Activated CD8-positive, alpha-beta T cell treated with anti-CD3 and anti-CD28 coated beads, Interleukin-2, amount 10 ng/mL, durations not matched to agents 7 days and 5 days (primary cell): ENCODE measurements at regions of chr17 and their contacts with region 1.

Region 1: DNA sequence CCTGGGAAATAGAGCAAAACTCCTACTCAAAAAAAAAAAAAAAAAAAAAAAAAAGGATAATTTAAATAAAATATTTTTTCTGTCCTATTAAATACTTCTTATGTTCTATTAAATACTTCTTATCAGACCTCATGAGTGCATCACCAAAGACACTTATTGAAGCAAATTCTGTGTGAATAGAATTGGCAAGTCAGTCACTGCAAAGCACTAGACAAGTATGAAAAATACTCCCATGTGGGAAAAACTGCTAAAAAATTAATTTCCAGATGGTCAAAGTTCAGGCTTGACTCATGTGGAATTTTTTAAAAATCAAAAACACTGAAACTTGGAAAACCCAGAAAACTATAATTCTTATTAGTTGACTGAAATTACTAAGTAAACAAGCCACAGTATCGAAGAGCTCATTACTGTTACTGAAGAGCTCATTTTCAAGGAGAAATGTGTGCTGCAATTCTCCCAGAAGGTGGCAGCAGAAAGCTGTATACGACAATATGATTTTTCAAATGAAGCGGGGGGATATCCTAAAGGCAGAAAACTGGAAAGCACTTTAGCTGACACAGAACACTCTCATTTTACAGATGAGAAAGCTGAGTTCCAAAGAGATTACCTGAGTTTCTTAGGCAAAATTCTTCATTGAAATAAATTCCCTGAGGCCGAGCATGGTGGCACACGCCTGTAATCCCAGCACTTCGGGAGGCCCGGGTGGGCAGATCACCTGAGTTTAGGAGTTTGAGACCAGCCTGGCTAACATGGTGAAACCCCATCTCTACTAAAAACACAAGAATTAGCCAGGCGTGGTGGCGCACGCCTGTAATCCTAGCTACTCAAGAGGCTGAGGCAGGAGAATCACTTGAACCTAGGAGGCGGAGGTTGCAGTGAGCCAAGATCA is 15.9 kb upstream of the FBXO47 start:
- DNase-seq: peak; percentile 71
- ATAC-seq: peak; percentile 64
- H3K4me3 Mint-ChIP-seq: no peak overlapping the region
- H3K27ac Mint-ChIP-seq: no peak overlapping the region
- H3K4me1 Mint-ChIP-seq: peaks cover 5% of the 10 kb centered on the region
- H3K27me3 Mint-ChIP-seq: peaks cover 8% of the 10 kb centered on the region

Region 2: DNA sequence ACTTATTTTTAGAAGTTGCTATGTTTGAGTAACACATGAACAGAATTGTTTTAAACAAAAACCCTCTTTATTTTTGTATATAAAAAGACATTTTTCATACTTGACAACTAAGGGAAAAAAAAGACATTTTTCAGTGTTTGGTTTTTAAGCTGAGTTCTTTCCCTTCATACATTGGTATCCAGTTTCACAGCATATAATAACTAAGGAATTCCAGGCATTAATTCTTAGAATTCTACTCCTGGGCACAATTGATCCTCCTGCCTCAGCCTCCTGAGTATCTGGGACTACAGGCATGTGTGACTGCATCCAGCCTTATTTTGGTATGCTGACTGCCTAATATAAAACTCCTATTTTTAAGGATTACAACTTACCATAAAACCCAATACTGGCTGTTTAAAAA is 24.3 kb before region 1 on chr17:
- CTCF ChIA-PET with region 1: interaction called, 11 read pairs
- POLR2A ChIA-PET with region 1: no interaction called
- DNase-seq: no peak
- ATAC-seq: no peak
- H3K4me3 Mint-ChIP-seq: no peak overlapping the region
- H3K27ac Mint-ChIP-seq: no peak overlapping the region
- H3K4me1 Mint-ChIP-seq: peaks cover 33% of the 10 kb centered on the region
- H3K27me3 Mint-ChIP-seq: no peaks in the 10 kb centered on the region

Region 3: GRCh38 chr17:39014044-39014794 is 31.1 kb after region 1 on chr17:
- CTCF ChIA-PET with region 1: interaction called, 34 read pairs
- POLR2A ChIA-PET with region 1: no interaction called
- DNase-seq: no peak
- ATAC-seq: no peak
- H3K4me3 Mint-ChIP-seq: no peak overlapping the region
- H3K27ac Mint-ChIP-seq: no peak overlapping the region
- H3K4me1 Mint-ChIP-seq: peaks cover 27% of the 10 kb centered on the region
- H3K27me3 Mint-ChIP-seq: no peaks in the 10 kb centered on the region

Region 4: GRCh38 chr17:39069114-39069756 is 86.1 kb after region 1 on chr17:
- CTCF ChIA-PET with region 1: interaction called, 24 read pairs
- POLR2A ChIA-PET with region 1: no interaction called
- DNase-seq: peak; percentile 59
- ATAC-seq: peak; percentile 79
- H3K4me3 Mint-ChIP-seq: no peak overlapping the region
- H3K27ac Mint-ChIP-seq: no peak overlapping the region
- H3K4me1 Mint-ChIP-seq: peaks cover 18% of the 10 kb centered on the region
- H3K27me3 Mint-ChIP-seq: peaks cover 4% of the 10 kb centered on the region

Region 5: GRCh38 chr17:39110435-39111136 is 127.5 kb after region 1 on chr17:
- CTCF ChIA-PET with region 1: no interaction called
- POLR2A ChIA-PET with region 1: no interaction called
- DNase-seq: no peak
- ATAC-seq: no peak
- H3K4me3 Mint-ChIP-seq: no peak overlapping the region
- H3K27ac Mint-ChIP-seq: no peak overlapping the region
- H3K4me1 Mint-ChIP-seq: no peaks in the 10 kb centered on the region
- H3K27me3 Mint-ChIP-seq: no peaks in the 10 kb centered on the region

Region 6: GRCh38 chr17:39144416-39144840 is 161.3 kb after region 1 on chr17:
- CTCF ChIA-PET with region 1: interaction called, 289 read pairs
- POLR2A ChIA-PET with region 1: no interaction called
- DNase-seq: no peak
- ATAC-seq: no peak
- H3K4me3 Mint-ChIP-seq: no peak overlapping the region
- H3K27ac Mint-ChIP-seq: no peak overlapping the region
- H3K4me1 Mint-ChIP-seq: no peaks in the 10 kb centered on the region
- H3K27me3 Mint-ChIP-seq: peaks cover 5% of the 10 kb centered on the region

Region 7: GRCh38 chr17:39174907-39175694 is 192.0 kb after region 1 on chr17:
- CTCF ChIA-PET with region 1: interaction called, 100 read pairs
- POLR2A ChIA-PET with region 1: interaction called, 4 read pairs
- DNase-seq: peak; percentile 87
- ATAC-seq: peak; percentile 87
- H3K4me3 Mint-ChIP-seq: no peak overlapping the region
- H3K27ac Mint-ChIP-seq: no peak overlapping the region
- H3K4me1 Mint-ChIP-seq: peaks cover 34% of the 10 kb centered on the region
- H3K27me3 Mint-ChIP-seq: no peaks in the 10 kb centered on the region

Region 8: DNA sequence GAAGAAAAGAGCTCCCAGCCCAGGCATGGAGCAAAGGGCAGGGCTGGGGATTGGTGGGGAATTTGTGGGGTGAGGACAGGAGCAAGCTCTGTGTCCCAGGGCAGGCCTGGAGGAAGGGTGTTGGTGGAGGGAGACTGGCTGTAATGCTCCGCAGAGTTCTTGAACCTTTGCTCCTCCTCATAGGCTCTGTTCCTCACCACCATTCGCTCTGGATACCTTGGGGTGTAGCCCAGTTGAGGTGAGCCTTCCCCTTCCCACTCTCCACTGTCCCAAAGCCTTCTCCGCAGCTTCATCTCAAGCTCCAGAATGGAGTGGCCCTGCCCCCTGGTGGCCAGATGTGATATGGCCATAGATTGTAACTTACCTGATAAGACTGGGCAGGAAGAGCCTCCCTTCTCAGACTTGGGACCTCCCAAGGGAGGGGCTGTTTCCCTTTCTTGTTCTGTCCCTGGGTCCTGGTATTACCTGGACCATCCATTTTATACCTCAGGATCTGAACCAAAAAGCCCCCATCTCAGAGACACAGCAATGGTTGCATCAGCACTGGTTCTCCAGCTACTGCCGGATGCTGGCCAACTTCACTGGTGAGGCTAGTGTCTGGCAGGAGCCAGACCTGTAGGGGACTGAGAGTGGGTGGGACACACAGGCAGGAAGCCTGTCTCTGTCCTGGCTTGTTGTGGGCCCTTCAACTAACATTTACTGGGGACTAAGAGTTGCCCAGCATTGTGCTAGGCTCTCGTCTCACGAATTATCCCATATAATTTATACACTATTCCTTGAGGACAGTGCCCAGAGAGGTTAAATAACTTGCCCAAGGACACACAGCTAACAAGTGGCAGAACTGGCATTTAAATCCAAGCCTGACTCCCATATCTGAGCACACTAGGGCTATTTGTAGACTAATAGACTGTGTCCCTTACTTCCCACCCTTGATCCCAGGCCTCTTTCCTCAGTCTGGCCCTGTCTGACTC is 261.8 kb after region 1 on chr17:
- CTCF ChIA-PET with region 1: interaction called, 37 read pairs
- POLR2A ChIA-PET with region 1: interaction called, 3 read pairs
- DNase-seq: peak; percentile 91
- ATAC-seq: peak; percentile 93
- H3K4me3 Mint-ChIP-seq: no peak overlapping the region
- H3K27ac Mint-ChIP-seq: peak overlapping the region; percentile 66
- H3K4me1 Mint-ChIP-seq: peaks cover 16% of the 10 kb centered on the region
- H3K27me3 Mint-ChIP-seq: no peaks in the 10 kb centered on the region